ENCODE measurements at regions of chr12 and their contacts with region 1.

Region 1: GRCh38 chr12:65602610-65603295 is 221.5 kb upstream of the HMGA2 start:
- DNase-seq: peak; percentile 87
- H3K4me3 ChIP-seq: no peak overlapping the region
- H3K27ac ChIP-seq: no peak overlapping the region
- H3K4me1 ChIP-seq: peaks cover 7% of the 10 kb centered on the region
- H3K27me3 ChIP-seq: no peaks in the 10 kb centered on the region
- CTCF ChIP-seq: peak; percentile 48

Region 2: GRCh38 chr12:64759035-64759901 is 843.5 kb before region 1 on chr12 and contains the start of gene GNS:
- intact Hi-C with region 1: no loop called
- DNase-seq: peak; percentile 98
- H3K4me3 ChIP-seq: peak within 1 kb of the TSS; percentile 100
- H3K27ac ChIP-seq: peak within 1 kb of the TSS; percentile 89
- H3K4me1 ChIP-seq: peaks cover 5% of the 10 kb centered on the region
- H3K27me3 ChIP-seq: no peaks in the 10 kb centered on the region
- CTCF ChIP-seq: no peak
- total RNA-seq, gene GNS: 47.5 to 67.6 TPM

Region 3: DNA sequence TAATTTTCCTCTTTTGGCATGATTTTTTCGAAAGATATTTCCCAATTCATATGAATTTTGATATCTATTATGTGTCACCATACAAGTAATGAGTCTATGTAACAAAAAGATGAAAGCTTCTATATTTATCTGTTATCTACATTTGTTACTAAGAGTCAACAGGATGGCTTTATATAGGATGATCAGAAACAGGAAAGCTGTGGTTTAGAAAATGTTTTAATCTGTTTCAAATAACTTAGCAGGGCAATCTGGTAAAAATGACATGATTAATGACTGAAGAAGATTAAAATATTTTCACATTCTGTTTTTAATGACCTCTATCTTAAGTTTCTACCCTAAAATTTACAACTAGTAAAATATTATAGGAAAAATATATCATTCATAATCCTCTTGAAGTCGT is 218.5 kb before region 1 on chr12:
- intact Hi-C with region 1: no loop called
- DNase-seq: no peak
- H3K4me3 ChIP-seq: no peak overlapping the region
- H3K27ac ChIP-seq: no peak overlapping the region
- H3K4me1 ChIP-seq: no peaks in the 10 kb centered on the region
- H3K27me3 ChIP-seq: no peaks in the 10 kb centered on the region
- CTCF ChIP-seq: no peak

Region 4: GRCh38 chr12:65666876-65667275 is 64.1 kb after region 1 on chr12:
- intact Hi-C with region 1: loop called (anchors 10 kb)
- DNase-seq: no peak
- H3K4me3 ChIP-seq: no peak overlapping the region
- H3K27ac ChIP-seq: no peak overlapping the region
- H3K4me1 ChIP-seq: no peaks in the 10 kb centered on the region
- H3K27me3 ChIP-seq: no peaks in the 10 kb centered on the region
- CTCF ChIP-seq: no peak

Region 5: DNA sequence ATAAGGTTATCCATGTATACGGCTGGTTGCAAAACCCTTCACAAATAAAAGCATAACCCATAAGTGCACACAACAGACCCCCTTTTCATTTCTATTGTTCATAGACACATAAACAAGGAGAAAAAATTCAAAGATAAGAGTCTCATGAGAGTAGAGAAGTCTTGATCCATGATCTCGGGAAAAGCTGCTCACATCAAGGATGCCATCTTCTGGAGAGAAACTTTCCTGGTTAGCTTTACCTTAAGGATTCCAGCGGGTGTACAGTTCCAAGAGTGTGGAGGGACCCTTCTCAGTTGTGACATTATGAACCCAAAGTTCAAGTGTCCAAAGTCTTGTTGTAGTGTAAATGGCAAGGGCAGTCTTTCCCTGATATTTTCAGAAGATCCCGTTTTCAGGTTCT is 383.3 kb after region 1 on chr12:
- intact Hi-C with region 1: loop called (anchors 10 kb)
- DNase-seq: no peak
- H3K4me3 ChIP-seq: no peak overlapping the region
- H3K27ac ChIP-seq: no peak overlapping the region
- H3K4me1 ChIP-seq: no peaks in the 10 kb centered on the region
- H3K27me3 ChIP-seq: no peaks in the 10 kb centered on the region
- CTCF ChIP-seq: no peak